WTC11 (cell line): ENCODE measurements at regions of chr2 and their contacts with region 1.

Region 1: DNA sequence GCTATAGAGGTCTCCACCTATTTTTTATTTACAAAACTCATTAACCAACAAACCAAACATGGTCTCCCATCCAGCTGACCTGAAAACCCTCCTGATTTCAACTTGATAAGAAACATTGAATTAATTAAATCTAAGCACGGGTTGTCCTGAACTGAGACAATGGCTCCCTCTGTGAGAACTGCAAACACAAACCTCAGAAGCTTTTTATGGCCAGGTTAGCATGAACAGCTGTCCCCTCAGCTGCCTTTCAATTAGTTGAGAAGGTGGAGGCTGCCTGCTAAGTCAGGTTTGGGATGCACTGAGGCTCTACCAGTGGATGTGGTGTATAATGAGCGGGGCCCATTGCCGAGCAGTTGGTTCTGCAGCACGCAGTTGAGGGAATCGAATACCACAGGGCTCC is 258.5 kb upstream of the DDX18 start:
- DNase-seq: no peak
- ATAC-seq: no peak
- H3K4me3 Mint-ChIP-seq: no peak overlapping the region
- H3K27ac Mint-ChIP-seq: no peak overlapping the region
- H3K4me1 Mint-ChIP-seq: peaks cover 63% of the 10 kb centered on the region
- H3K27me3 Mint-ChIP-seq: no peaks in the 10 kb centered on the region
- CTCF ChIP-seq: no peak

Region 2: DNA sequence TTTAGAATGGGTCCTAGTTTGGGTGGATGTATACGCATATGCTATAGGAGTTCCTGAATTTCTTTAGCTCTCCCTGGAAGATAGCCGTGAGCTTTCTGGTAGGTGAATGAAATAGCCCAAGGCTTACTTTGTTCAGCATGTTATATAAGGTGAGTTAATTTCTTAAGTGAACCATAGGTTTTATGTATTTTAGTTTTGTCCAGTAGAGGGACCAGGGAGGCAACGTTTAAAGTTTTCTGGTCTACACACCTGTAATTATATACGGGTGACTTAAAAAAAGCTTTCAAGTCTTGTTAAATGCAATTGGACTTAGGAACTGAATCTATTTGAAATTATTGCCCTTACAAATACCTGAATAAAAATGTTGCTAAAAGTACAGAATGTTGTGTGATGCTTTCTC is 144.0 kb before region 1 on chr2:
- CTCF ChIA-PET with region 1: no interaction called
- POLR2A ChIA-PET with region 1: no interaction called
- DNase-seq: no peak
- ATAC-seq: no peak
- H3K4me3 Mint-ChIP-seq: no peak overlapping the region
- H3K27ac Mint-ChIP-seq: no peak overlapping the region
- H3K4me1 Mint-ChIP-seq: no peaks in the 10 kb centered on the region
- H3K27me3 Mint-ChIP-seq: no peaks in the 10 kb centered on the region; the same call in 1 of the 2 replicates
- CTCF ChIP-seq: no peak

Region 3: GRCh38 chr2:117536139-117536538 is 19.8 kb before region 1 on chr2:
- CTCF ChIA-PET with region 1: interaction called, 33 read pairs
- POLR2A ChIA-PET with region 1: no interaction called
- DNase-seq: peak; percentile 28
- ATAC-seq: peak; percentile 96
- H3K4me3 Mint-ChIP-seq: no peak overlapping the region
- H3K27ac Mint-ChIP-seq: no peak overlapping the region
- H3K4me1 Mint-ChIP-seq: peaks cover 27% of the 10 kb centered on the region
- H3K27me3 Mint-ChIP-seq: no peaks in the 10 kb centered on the region
- CTCF ChIP-seq: no peak; the same call in 1 of the 2 replicates

Region 4: DNA sequence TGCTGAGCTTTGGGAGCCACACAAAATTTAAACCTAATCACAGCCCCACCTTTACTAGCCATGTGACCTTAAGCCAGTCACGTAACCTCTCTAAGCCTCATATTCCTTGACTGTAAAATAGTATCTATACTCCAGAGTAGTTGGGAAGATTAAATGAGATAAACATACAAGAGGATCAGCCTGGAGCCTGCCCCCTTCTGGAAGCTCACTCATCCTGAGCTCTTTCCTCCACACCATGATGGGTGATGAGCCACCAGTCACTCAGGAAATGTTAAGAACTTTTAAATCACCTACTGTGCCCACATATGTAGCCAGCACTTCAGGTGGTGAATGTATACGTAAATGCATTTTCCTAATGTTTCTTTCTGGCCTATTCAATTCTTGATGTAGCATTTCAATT is 62.6 kb after region 1 on chr2:
- CTCF ChIA-PET with region 1: interaction called, 11 read pairs
- POLR2A ChIA-PET with region 1: no interaction called
- DNase-seq: no peak
- ATAC-seq: peak; percentile 51
- H3K4me3 Mint-ChIP-seq: no peak overlapping the region
- H3K27ac Mint-ChIP-seq: no peak overlapping the region
- H3K4me1 Mint-ChIP-seq: peaks cover 76% of the 10 kb centered on the region
- H3K27me3 Mint-ChIP-seq: no peaks in the 10 kb centered on the region
- CTCF ChIP-seq: no peak